ENCODE measurements at regions of chr2 and their contacts with region 1.

Region 1: DNA sequence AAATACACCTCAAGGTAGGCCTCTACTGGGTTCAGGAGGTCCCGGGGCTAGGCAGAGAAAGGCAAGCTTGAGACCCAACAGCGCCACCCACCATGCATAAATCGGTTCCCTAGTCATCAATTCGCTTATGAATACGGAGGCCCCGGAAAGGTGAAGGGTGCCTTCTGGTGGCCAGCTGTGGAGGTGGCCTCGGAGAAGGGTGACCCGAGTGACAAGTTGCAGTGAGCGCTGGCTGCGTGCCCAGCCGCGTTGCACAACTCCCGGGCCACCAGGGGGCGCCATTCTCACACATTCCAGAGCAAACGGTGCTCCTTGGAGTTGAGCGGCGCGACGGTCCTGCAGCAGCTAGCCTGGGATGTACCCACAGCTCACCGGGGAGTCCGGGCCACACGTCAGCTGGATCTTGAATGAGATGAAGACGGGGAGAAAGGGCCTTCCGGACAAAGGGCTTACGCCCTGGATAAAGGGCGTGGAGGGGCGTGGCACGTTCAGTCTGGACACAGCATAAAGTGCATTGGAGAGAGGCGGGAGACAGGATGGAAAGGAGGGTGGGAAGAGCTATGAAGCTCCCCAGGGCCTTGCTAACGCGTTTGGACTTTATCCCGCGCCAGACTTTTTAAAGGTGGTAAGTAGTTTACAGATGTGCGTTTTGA is 20.4 kb downstream of the TMSB10 start:
- DNase-seq: peak; percentile 84
- ATAC-seq: peak; percentile 68
- H3K4me3 ChIP-seq: peak overlapping the region; percentile 31
- H3K27ac ChIP-seq: peak overlapping the region; percentile 2
- H3K4me1 ChIP-seq: peaks cover 6% of the 10 kb centered on the region; the same call in 1 of the 2 replicates
- H3K27me3 ChIP-seq: no peaks in the 10 kb centered on the region
- CTCF ChIP-seq: peak; percentile 86
- POLR2A ChIP-seq: peak; percentile 26; the same call in 1 of the 2 replicates
- RAD21 ChIP-seq: peak; percentile 74

Region 2: DNA sequence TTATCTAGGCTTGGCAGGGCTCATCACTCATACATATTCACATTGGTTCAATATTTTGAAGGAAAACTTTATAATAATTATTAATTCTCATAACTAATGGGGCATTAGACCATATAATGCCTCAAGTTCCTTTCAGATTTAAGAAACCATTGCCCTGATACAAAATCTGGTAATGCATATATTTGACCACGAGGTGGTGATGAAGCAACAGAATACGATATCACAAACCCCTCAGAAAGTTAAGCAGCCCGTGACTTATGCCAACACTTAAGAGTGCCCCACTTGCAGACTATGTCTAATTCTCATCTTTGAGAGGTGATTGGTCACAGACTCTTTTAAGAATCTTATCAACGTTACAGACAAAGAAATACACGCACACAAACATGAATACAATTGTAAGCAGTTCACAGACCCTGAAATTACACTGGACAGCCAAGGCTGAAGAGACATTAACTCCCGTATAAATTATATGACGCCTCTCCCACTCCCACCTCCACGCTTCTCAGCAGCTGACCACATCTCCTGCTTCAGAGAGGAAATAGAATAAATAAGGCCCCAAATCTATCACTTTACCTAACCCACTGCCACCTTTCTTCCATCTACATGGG is 430.2 kb before region 1 on chr2:
- CTCF ChIA-PET with region 1: no interaction called
- POLR2A ChIA-PET with region 1: no interaction called
- dilution Hi-C with region 1: no loop called
- in situ Hi-C with region 1: loop called (anchors 10 kb)
- intact Hi-C with region 1: loop called (anchors 1 kb)
- DNase-seq: peak; percentile 78
- ATAC-seq: peak; percentile 82
- H3K4me3 ChIP-seq: no peak overlapping the region
- H3K27ac ChIP-seq: no peak overlapping the region
- H3K4me1 ChIP-seq: peaks cover 4% of the 10 kb centered on the region
- H3K27me3 ChIP-seq: no peaks in the 10 kb centered on the region
- CTCF ChIP-seq: peak; percentile 76
- POLR2A ChIP-seq: peak; percentile 33; the same call in 1 of the 2 replicates
- RAD21 ChIP-seq: peak; percentile 82

Region 3: DNA sequence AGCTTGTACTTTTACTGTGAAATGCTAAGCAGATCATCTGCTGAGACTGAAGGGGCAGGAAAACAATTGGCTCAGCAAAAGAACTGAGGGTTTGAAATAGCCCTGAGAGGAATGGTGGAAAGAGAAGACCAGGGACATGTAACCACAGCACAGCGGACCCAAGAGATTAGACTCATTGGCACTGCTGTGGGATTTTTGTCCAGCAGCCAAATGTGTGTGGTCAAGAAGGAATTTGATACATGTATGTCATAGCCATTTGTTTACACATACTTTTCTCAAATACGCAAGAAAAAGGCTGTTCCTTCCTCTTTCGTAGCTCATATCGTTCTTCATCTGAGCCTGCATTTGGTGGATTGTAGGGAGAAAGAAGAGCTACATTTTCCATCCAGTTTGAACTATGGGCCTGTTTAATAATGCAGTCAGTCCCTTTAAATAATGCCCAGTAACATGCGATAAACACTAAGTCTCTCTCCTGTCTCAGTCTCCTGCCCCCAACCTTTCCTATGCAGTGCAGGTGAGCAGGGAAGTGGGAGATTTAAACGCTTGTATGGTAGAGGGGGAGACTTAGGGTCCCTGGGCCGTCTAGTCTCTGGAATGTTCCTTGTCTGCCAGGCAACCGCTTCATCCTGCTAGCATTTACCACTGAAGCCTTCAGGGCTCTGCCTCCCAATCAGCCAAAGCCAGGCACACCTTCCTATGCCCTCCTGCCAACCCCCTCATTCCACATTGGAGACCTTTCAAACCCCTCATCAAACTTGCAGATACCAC is 118.6 kb before region 1 on chr2:
- CTCF ChIA-PET with region 1: no interaction called
- POLR2A ChIA-PET with region 1: no interaction called
- dilution Hi-C with region 1: no loop called
- in situ Hi-C with region 1: no loop called
- intact Hi-C with region 1: loop called (anchors 2 kb)
- DNase-seq: peak; percentile 100
- ATAC-seq: peak; percentile 87
- H3K4me3 ChIP-seq: no peak overlapping the region
- H3K27ac ChIP-seq: peak overlapping the region; percentile 97
- H3K4me1 ChIP-seq: peaks cover 11% of the 10 kb centered on the region
- H3K27me3 ChIP-seq: no peaks in the 10 kb centered on the region
- CTCF ChIP-seq: no peak
- POLR2A ChIP-seq: peak; percentile 76
- RAD21 ChIP-seq: no peak

Region 4: GRCh38 chr2:84897773-84898172 is 28.1 kb before region 1 on chr2:
- CTCF ChIA-PET with region 1: no interaction called
- POLR2A ChIA-PET with region 1: no interaction called
- dilution Hi-C with region 1: no loop called
- in situ Hi-C with region 1: no loop called
- intact Hi-C with region 1: no loop called
- DNase-seq: no peak
- ATAC-seq: no peak
- H3K4me3 ChIP-seq: no peak overlapping the region
- H3K27ac ChIP-seq: peak overlapping the region; percentile 70
- H3K4me1 ChIP-seq: peaks cover 17% of the 10 kb centered on the region
- H3K27me3 ChIP-seq: no peaks in the 10 kb centered on the region
- CTCF ChIP-seq: no peak
- POLR2A ChIP-seq: no peak
- RAD21 ChIP-seq: no peak

Region 5: DNA sequence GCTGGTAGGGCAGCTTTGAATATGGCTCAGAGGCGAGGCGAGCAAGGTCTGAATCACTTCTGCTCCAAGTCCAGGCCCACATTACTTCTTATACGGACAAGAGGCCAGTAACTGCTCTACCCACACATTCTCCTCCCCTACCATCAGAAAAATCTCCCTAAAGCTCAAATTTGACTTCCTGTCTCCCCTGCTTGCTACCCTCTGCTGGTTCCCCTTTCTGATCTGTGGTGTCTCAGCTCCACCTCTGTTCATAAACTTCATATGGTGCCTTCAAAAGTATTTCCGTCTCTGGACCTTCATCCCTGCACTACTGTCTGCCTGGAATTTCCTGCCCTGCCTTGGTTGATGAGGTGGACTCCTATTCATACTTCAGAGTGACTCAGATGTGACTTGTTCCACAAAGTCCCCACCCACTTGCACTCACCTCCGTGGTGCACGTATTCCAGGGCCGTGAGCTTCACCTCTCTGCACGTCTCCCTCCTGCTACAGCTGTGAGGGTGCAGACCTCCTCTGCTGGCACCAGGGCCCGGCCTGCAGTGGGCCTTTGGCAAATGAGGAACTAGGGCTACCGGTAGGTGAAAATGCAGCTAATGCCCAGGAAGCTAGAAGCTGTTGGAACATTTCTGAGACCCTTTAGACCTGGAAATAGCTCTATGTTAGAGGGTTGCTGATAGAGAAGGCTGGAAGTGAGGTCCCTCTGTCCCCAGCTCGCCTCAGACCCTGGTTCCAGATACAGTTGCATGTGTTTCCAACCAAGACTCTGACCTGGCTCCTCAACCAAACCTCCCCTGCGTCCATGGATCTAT is 20.6 kb after region 1 on chr2:
- CTCF ChIA-PET with region 1: interaction called, 17 read pairs
- POLR2A ChIA-PET with region 1: interaction called, 7 read pairs
- dilution Hi-C with region 1: no loop called
- in situ Hi-C with region 1: no loop called
- intact Hi-C with region 1: no loop called
- DNase-seq: peak; percentile 91
- ATAC-seq: peak; percentile 85
- H3K4me3 ChIP-seq: no peak overlapping the region
- H3K27ac ChIP-seq: peak overlapping the region; percentile 60
- H3K4me1 ChIP-seq: peaks cover 4% of the 10 kb centered on the region; the same call in 1 of the 2 replicates
- H3K27me3 ChIP-seq: no peaks in the 10 kb centered on the region
- CTCF ChIP-seq: peak; percentile 12; the same call in 1 of the 2 replicates
- POLR2A ChIP-seq: peak; percentile 68; the same call in 1 of the 2 replicates
- RAD21 ChIP-seq: peak; percentile 21; the same call in 1 of the 2 replicates

Region 6: DNA sequence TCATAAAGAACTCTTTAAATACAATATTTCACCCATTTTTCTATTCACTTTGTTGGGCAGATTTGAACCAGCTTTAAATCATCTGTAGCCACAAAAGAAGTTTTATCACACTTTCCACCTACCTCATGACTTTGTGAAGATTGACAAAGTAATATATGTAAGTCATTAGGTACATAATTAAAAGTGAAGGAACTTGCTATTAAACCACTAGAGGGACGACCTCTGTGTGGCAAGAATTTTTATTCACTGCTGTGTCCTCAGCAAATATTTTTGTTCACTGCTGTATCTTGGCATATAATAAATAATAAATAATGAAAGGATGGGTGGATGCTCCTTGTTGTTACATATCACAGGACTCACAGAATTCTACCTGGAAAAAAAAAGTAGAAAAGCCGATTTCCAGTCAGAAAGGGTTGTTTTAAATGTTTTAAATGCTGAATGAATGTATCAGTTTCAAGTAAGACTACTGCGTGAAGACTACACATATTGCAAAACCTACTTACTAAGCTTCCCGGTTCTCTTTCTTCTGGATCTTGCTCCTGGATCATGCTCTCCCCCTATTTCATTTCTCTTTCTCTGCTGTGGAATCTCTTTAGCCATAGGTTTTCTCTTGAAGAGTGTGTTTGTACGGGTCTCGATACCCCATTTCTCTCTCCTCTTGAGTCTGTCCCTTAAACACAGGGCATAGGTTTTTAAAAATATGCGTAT is 90.0 kb after region 1 on chr2:
- CTCF ChIA-PET with region 1: interaction called, 4 read pairs
- POLR2A ChIA-PET with region 1: no interaction called
- dilution Hi-C with region 1: no loop called
- in situ Hi-C with region 1: no loop called
- intact Hi-C with region 1: loop called (anchors 2 kb)
- DNase-seq: no peak
- ATAC-seq: 0 out of 2 replicates have a peak, but pooled peaks have one; percentile 18
- H3K4me3 ChIP-seq: no peak overlapping the region
- H3K27ac ChIP-seq: 0 out of 2 replicates have a peak overlapping the region, but pooled peaks have one; percentile 5
- H3K4me1 ChIP-seq: peaks cover 24% of the 10 kb centered on the region
- H3K27me3 ChIP-seq: no peaks in the 10 kb centered on the region
- CTCF ChIP-seq: peak; percentile 23; the same call in 1 of the 2 replicates
- POLR2A ChIP-seq: no peak
- RAD21 ChIP-seq: no peak

Region 7: GRCh38 chr2:85302121-85302520 is 376.3 kb after region 1 on chr2:
- CTCF ChIA-PET with region 1: no interaction called
- POLR2A ChIA-PET with region 1: interaction called, 3 read pairs
- dilution Hi-C with region 1: no loop called
- in situ Hi-C with region 1: no loop called
- intact Hi-C with region 1: loop called (anchors 2 kb)
- DNase-seq: peak; percentile 2
- ATAC-seq: no peak
- H3K4me3 ChIP-seq: no peak overlapping the region
- H3K27ac ChIP-seq: no peak overlapping the region
- H3K4me1 ChIP-seq: no peaks in the 10 kb centered on the region
- H3K27me3 ChIP-seq: no peaks in the 10 kb centered on the region
- CTCF ChIP-seq: no peak
- POLR2A ChIP-seq: no peak
- RAD21 ChIP-seq: no peak